AG04449 (cell line): ENCODE measurements at regions of chr17 and their contacts with region 1.

Region 1: DNA sequence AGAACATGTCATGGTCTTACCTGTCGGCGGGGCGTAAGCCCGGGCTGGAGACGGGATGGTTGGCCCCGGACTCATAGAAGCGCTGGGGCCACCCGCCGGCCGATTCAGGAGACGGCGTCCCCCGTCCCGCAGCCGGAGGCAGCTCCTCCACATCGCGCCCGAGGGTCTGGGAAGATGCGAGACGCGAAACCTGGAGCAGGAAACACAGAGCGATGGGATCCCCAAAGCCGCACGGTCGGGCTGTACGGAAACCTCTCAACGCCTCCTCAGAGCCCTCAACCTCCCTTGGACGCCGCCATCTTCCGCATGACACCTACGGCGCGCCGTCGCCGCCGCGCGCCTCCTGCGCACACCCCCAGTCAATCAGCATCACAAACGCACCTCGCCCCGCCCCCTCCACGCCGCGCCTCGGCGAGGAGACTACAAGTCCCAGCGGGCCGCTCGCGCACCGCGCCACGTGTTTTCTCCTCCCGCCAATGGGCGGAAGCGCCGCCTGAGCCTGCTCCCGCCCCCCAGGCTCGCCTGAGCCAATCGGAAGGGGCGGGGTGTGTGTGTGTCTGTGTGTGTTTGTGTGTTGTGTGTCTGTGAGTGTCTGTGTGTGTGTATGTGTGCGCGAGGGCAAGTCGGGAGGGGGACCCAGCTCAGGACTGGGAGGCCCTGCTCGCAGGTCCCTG is at the starts of genes ATPAF2 and GID4:
- DNase-seq: peak; percentile 89
- H3K4me3 ChIP-seq: peak within 1 kb of the TSS; percentile 85
- CTCF ChIP-seq: peak; percentile 6

Region 2: DNA sequence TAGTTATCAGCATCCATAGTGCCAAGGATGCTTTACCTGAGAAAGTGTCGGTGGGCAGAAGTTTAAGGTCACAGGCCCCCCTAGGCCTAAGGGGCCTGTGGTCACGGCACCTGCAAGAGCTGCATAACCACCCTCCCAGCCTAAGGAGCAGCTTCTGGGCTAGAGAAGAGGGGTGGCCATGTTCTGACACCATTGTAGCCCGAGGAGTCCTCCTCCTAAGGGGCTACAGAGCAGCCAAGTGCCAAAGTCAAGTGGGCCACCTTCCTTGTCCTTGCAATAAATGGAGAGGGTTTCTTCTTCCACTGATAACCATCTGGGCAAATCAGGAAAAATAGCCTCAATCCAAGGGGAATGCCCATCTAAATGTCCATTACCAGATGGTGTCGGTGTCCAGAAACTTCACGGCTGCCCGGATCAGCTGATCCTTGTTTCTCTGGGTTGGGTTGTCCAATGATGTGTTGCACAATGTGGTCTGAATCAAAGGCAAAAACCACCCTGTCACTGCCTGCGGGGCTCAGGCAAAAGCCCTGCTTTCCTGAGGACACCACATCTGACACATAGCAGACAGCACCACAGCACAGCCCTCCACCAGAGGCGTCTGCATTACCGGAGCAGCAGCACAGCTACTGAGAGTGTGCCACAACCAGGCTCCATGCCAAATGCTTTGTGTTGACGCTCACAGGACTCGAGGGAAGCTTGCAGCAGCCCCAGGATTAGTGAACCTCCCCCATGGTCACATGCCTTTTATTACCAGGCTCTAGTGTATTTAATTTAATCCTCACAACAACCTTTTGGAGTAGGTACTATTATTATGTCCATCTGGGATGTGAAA is 12.8 kb before region 1 on chr17:
- CTCF ChIA-PET with region 1: interaction called, 30 read pairs
- POLR2A ChIA-PET with region 1: no interaction called
- DNase-seq: peak; percentile 49
- H3K4me3 ChIP-seq: no peak overlapping the region
- CTCF ChIP-seq: peak; percentile 8